ENCODE measurements at regions of chr3 and their contacts with region 1.

Region 1: GRCh38 chr3:48716982-48717746 is at the start of gene IP6K2:
- DNase-seq: peak; percentile 97 to 99 (median 99)
- ATAC-seq: peak; percentile 99
- H3K4me3 ChIP-seq: peak within 1 kb of the TSS; percentile 90 to 100
- H3K4me3 Mint-ChIP-seq: peak within 1 kb of the TSS; percentile 99
- H3K27ac ChIP-seq: peak within 1 kb of the TSS; percentile 87 to 97
- H3K27ac Mint-ChIP-seq: peak within 1 kb of the TSS; percentile 97
- H3K4me1 ChIP-seq: peaks cover 27% of the 10 kb centered on the region
- H3K4me1 Mint-ChIP-seq: peaks cover 48% of the 10 kb centered on the region
- H3K27me3 ChIP-seq: no peaks in the 10 kb centered on the region
- H3K27me3 Mint-ChIP-seq: no peaks in the 10 kb centered on the region
- CTCF ChIP-seq: no peak
- total RNA-seq, gene IP6K2: 118 to 123 TPM

Region 2: GRCh38 chr3:46960081-46960701 is 1757.0 kb before region 1 on chr3:
- CTCF ChIA-PET with region 1: no interaction called
- POLR2A ChIA-PET with region 1: no interaction called
- intact Hi-C with region 1: loop called in 1 of 2 experiments (anchors 10 kb)
- DNase-seq: no peak
- ATAC-seq: no peak
- H3K4me3 ChIP-seq: no peak overlapping the region
- H3K4me3 Mint-ChIP-seq: peak overlapping the region; percentile 46
- H3K27ac ChIP-seq: peak overlapping the region in 1 of 2 experiments; percentile 77
- H3K27ac Mint-ChIP-seq: peak overlapping the region; percentile 93
- H3K4me1 ChIP-seq: peaks cover 65% of the 10 kb centered on the region
- H3K4me1 Mint-ChIP-seq: peaks cover 77% of the 10 kb centered on the region
- H3K27me3 ChIP-seq: no peaks in the 10 kb centered on the region
- H3K27me3 Mint-ChIP-seq: no peaks in the 10 kb centered on the region
- CTCF ChIP-seq: no peak

Region 3: DNA sequence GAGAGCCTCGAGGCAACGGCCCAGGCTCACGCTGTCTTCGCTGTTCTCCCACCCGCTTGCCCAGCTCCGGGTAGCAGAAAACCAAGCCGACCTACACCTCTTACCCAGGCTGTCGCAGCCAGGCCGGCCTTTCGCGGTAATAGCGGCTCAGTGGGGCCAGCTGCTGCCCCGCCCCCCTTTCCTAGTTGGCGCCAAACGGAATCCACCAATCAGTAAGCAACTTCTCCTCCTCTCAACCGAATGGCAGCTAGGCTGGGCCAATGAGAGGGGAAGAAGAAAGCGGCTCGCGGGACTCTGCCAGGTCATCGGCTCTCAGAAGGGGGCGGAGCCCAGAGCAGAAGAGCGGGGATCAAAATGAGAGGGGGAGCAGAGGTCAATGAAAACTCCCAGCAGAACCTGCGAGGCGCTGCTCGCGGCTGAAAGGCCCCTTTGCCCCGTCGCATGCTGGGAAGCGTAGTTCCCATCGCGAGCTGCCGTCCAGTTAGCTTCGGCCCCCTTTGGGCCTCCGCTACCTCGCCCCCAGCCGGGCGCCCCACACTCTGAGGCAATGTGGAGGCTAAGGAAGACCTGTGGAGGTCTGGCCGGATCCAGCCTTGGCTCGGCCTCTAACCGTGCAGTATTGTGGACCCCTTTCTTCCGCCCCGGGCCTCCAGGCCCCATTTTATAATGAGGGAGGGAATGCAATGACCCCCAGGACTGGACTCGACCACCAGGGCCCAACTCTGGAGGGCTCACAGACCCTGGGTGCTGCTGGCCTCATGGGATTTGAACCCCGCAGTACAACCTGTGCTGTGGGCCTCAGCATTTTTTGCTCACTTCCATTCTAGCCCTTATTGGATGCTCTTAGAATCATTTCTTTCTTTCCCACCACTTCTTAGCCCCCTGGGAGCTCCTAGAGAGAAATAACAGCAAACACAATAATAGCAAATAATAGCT is 528.6 kb before region 1 on chr3 and contains the start of gene CDC25A:
- CTCF ChIA-PET with region 1: no interaction called
- POLR2A ChIA-PET with region 1: no interaction called
- intact Hi-C with region 1: loop called in 1 of 2 experiments (anchors 1 kb)
- DNase-seq: peak; percentile 85 to 97 (median 92)
- ATAC-seq: peak; percentile 99
- H3K4me3 ChIP-seq: peak within 1 kb of the TSS; percentile 73 to 86
- H3K4me3 Mint-ChIP-seq: peak within 1 kb of the TSS; percentile 93
- H3K27ac ChIP-seq: peak within 1 kb of the TSS in 1 of 2 experiments; percentile 68
- H3K27ac Mint-ChIP-seq: peak within 1 kb of the TSS; percentile 45
- H3K4me1 ChIP-seq: peaks cover 12% of the 10 kb centered on the region
- H3K4me1 Mint-ChIP-seq: peaks cover 14% of the 10 kb centered on the region
- H3K27me3 ChIP-seq: peaks cover 4 to 6% of the 10 kb centered on the region in 2 experiments
- H3K27me3 Mint-ChIP-seq: peaks cover 21% of the 10 kb centered on the region
- CTCF ChIP-seq: no peak
- total RNA-seq, gene CDC25A: 0.31 TPM in 1 of 2 experiments, not detected in the other

Region 4: GRCh38 chr3:48663415-48664312 is 53.5 kb before region 1 on chr3:
- CTCF ChIA-PET with region 1: interaction called, 3 read pairs
- POLR2A ChIA-PET with region 1: no interaction called
- intact Hi-C with region 1: loop called in 1 of 2 experiments (anchors 1 kb)
- DNase-seq: peak; percentile 70 to 93 (median 79)
- ATAC-seq: peak; percentile 78
- H3K4me3 ChIP-seq: peak overlapping the region; percentile 61 to 65
- H3K4me3 Mint-ChIP-seq: peak overlapping the region; percentile 75
- H3K27ac ChIP-seq: peak overlapping the region in 1 of 2 experiments; percentile 30
- H3K27ac Mint-ChIP-seq: no peak overlapping the region
- H3K4me1 ChIP-seq: peaks cover 30% of the 10 kb centered on the region
- H3K4me1 Mint-ChIP-seq: peaks cover 9% of the 10 kb centered on the region
- H3K27me3 ChIP-seq: peaks cover 14 to 21% of the 10 kb centered on the region in 2 experiments
- H3K27me3 Mint-ChIP-seq: peaks cover 23% of the 10 kb centered on the region
- CTCF ChIP-seq: peak; percentile 56

Region 5: GRCh38 chr3:48847504-48848423 is 130.6 kb after region 1 on chr3 and contains the start of gene PRKAR2A:
- CTCF ChIA-PET with region 1: no interaction called
- POLR2A ChIA-PET with region 1: interaction called, 3 read pairs
- intact Hi-C with region 1: loop called in 1 of 2 experiments (anchors 2 kb)
- DNase-seq: peak; percentile 67 to 93 (median 83)
- ATAC-seq: peak; percentile 75
- H3K4me3 ChIP-seq: peak within 1 kb of the TSS; percentile 68 to 72
- H3K4me3 Mint-ChIP-seq: peak within 1 kb of the TSS; percentile 86
- H3K27ac ChIP-seq: peak within 1 kb of the TSS; percentile 40 to 90
- H3K27ac Mint-ChIP-seq: peak within 1 kb of the TSS; percentile 97
- H3K4me1 ChIP-seq: peaks cover 26% of the 10 kb centered on the region
- H3K4me1 Mint-ChIP-seq: peaks cover 31% of the 10 kb centered on the region
- H3K27me3 ChIP-seq: no peaks in the 10 kb centered on the region
- H3K27me3 Mint-ChIP-seq: no peaks in the 10 kb centered on the region
- CTCF ChIP-seq: no peak
- total RNA-seq, gene PRKAR2A: 75.2 to 75.6 TPM

Region 6: GRCh38 chr3:48918388-48919214 is 201.4 kb after region 1 on chr3 and contains the start of gene ARIH2:
- CTCF ChIA-PET with region 1: no interaction called
- POLR2A ChIA-PET with region 1: interaction called, 9 read pairs
- intact Hi-C with region 1: loop called in 1 of 2 experiments (anchors 1 kb)
- DNase-seq: peak; percentile 74 to 95 (median 88)
- ATAC-seq: peak; percentile 72
- H3K4me3 ChIP-seq: peak within 1 kb of the TSS; percentile 92 to 93
- H3K4me3 Mint-ChIP-seq: peak within 1 kb of the TSS; percentile 98
- H3K27ac ChIP-seq: peak within 1 kb of the TSS; percentile 99
- H3K27ac Mint-ChIP-seq: peak within 1 kb of the TSS; percentile 99
- H3K4me1 ChIP-seq: peaks cover 22% of the 10 kb centered on the region
- H3K4me1 Mint-ChIP-seq: peaks cover 27% of the 10 kb centered on the region
- H3K27me3 ChIP-seq: no peaks in the 10 kb centered on the region
- H3K27me3 Mint-ChIP-seq: no peaks in the 10 kb centered on the region
- CTCF ChIP-seq: peak; percentile 24
- total RNA-seq, gene ARIH2: 225 to 242 TPM